Sigmoid colon (tissue), 7 donors: ENCODE measurements at regions of chr5 and their contacts with region 1.

Region 1: GRCh38 chr5:34929720-34930461 is 532 bp downstream of the DNAJC21 start:
- DNase-seq: peak; percentile 96
- H3K4me3 ChIP-seq: peak overlapping the region; percentile 60 to 95 (median 86)
- H3K27ac ChIP-seq: peak overlapping the region; percentile 87 to 97 (median 96)
- H3K4me1 ChIP-seq: peaks cover 0 to 24% (median 19%) of the 10 kb centered on the region in 4 donors
- H3K27me3 ChIP-seq: no peaks in the 10 kb centered on the region
- CTCF ChIP-seq: no peak
- EP300 ChIP-seq: no peak
- POLR2A ChIP-seq: no peak

Region 2: DNA sequence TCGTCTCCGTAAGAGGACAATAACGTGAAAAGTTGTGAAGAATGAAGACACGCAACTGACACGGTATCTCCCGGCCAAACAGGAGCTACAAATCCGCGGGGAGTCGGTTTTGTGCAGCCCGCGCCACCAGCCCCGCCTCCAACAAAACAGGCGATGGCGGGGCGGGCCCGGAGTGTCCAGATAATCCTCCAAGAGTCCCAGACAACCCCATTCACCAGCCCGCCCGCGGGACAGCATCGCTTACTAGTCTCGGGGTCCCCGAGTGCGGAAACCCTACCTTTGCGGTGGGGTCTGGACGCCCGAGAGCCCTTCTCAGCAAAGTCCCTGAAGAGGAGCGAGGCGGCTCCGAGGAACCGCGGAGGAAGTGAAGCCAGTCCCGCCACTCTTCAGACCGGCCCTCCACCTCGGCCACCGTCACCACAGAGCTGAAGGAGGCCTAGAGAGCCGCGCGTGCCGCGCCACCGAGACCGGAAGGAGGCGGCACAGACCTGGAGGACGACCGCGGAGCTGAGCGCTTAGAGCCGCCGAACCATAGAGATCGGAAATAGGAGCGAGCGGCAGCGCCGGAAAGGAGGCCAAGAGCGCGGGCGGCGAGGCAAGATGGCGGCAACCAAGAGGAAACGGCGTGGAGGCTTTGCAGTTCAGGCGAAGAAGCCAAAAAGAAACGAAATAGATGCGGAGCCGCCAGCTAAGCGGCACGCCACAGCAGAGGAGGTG is 14.6 kb before region 1 on chr5 and contains the starts of genes BRIX1 and RAD1:
- intact Hi-C with region 1: loop called (anchors 1 kb)
- DNase-seq: peak; percentile 97
- H3K4me3 ChIP-seq: peak within 1 kb of the TSS; percentile 72 to 99 (median 85)
- H3K27ac ChIP-seq: peak within 1 kb of the TSS; percentile 87 to 93 (median 90)
- H3K4me1 ChIP-seq: peaks cover 0 to 43% (median 36%) of the 10 kb centered on the region in 4 donors
- H3K27me3 ChIP-seq: no peaks in the 10 kb centered on the region
- CTCF ChIP-seq: no peak
- EP300 ChIP-seq: no peak
- POLR2A ChIP-seq: peak; percentile 76 to 79
- total RNA-seq, gene BRIX1: 8.6 to 26.0 (median 20.3) TPM
- total RNA-seq, gene RAD1: 15.8 to 25.8 (median 20.0) TPM

Region 3: GRCh38 chr5:35016174-35017051 is 86.5 kb after region 1 on chr5:
- intact Hi-C with region 1: no loop called
- DNase-seq: no peak
- H3K4me3 ChIP-seq: no peak overlapping the region
- H3K27ac ChIP-seq: no peak overlapping the region
- H3K4me1 ChIP-seq: no peaks in the 10 kb centered on the region
- H3K27me3 ChIP-seq: no peaks in the 10 kb centered on the region
- CTCF ChIP-seq: no peak
- EP300 ChIP-seq: no peak
- POLR2A ChIP-seq: no peak